HCT116 (cell line): ENCODE measurements at regions of chr5 and their contacts with region 1.

Region 1: GRCh38 chr5:41707853-41708603 is 162.2 kb downstream of the OXCT1 start:
- DNase-seq: peak; percentile 21
- ATAC-seq: peak; percentile 94
- H3K4me3 ChIP-seq: no peak overlapping the region
- H3K27ac ChIP-seq: no peak overlapping the region
- H3K4me1 ChIP-seq: no peaks in the 10 kb centered on the region
- H3K27me3 ChIP-seq: peaks cover 5% of the 10 kb centered on the region; the same call in 1 of the 2 replicates
- CTCF ChIP-seq: peak; percentile 39 to 64 (median 59); a peak in 5 of 6 replicates
- POLR2A ChIP-seq: no peak
- RAD21 ChIP-seq: peak; percentile 75

Region 2: DNA sequence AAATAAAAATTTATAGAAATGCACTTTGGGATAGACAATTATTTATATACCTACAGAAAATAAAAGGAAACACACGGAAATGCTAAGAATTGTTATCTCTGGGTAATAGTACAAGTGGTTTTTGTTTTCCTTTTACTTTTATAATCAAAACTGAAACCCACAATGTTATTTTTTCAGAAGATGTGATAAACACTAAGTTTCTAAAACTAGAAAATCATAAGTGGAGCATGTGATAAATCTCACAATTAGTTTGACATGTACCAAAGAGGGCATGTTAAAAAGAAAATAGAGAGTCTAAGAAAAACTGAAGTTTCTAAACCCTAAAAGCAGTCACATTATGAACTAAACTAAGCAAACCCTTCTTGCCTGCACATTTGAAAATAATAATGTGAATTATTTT is 101.1 kb after region 1 on chr5:
- CTCF ChIA-PET with region 1: no interaction called
- POLR2A ChIA-PET with region 1: no interaction called
- RAD21 ChIA-PET with region 1: no interaction called
- intact Hi-C with region 1: no loop called
- DNase-seq: no peak
- ATAC-seq: no peak
- H3K4me3 ChIP-seq: no peak overlapping the region
- H3K27ac ChIP-seq: no peak overlapping the region
- H3K4me1 ChIP-seq: no peaks in the 10 kb centered on the region
- H3K27me3 ChIP-seq: no peaks in the 10 kb centered on the region
- CTCF ChIP-seq: no peak
- POLR2A ChIP-seq: no peak
- RAD21 ChIP-seq: no peak

Region 3: GRCh38 chr5:41843456-41844370 is 135.7 kb after region 1 on chr5:
- CTCF ChIA-PET with region 1: interaction called, 28 read pairs
- POLR2A ChIA-PET with region 1: no interaction called
- RAD21 ChIA-PET with region 1: interaction called in 1 of 2 experiments, 3 read pairs
- intact Hi-C with region 1: loop called (anchors 1 kb)
- DNase-seq: peak; percentile 37
- ATAC-seq: peak; percentile 54; the same call in 1 of the 2 replicates
- H3K4me3 ChIP-seq: no peak overlapping the region
- H3K27ac ChIP-seq: no peak overlapping the region
- H3K4me1 ChIP-seq: no peaks in the 10 kb centered on the region
- H3K27me3 ChIP-seq: no peaks in the 10 kb centered on the region
- CTCF ChIP-seq: peak; percentile 71 to 89 (median 73)
- POLR2A ChIP-seq: no peak
- RAD21 ChIP-seq: peak; percentile 80